ENCODE measurements at regions of chr3 and their contacts with region 1.

Region 1: DNA sequence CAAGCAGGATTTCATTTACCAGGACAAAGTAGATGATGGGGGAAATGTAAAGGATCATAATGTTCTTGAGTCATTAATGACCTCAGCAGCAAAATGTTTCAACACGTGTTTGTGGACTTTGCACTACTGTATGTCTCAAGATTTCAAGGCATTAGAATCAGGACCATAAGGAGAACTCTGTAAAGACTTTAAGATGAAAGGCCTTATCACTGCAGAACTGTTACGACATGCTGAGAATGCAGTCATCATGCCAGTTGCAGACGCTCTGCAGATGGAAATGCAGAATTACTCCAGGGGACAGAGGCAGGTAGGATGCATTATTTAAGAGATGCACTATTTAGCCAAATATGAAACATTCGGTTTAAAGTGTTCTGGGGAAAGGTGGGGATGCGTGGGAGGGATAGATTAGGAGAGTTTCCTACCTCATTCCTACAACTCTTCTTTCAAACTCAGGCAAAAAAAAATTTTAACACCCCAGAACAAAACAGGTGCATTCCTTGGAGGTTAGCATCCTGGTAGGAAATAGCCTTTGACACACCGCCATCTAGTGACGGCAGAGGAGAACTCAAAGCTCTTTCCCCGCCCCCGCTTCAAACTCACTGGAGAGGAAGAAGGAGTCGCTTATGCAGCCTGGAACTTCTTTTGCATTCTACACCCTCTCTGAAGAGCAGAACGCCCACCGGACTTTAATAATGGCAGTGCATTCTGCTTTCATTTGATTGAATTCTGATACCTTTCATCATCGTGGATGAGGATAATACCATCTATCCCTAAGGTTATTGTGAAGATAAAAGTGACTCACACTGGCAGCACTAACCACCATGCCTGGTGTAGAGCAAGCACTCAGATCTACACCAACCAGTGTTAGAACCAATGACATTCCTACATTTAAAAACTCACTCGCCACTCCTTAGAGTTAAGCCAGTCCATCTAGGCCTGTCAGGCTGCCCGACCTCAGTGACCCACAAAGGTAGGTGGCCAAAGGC is 43.1 kb upstream of the TOPAZ1 start:
- DNase-seq: peak; percentile 79
- H3K4me3 ChIP-seq: no peak overlapping the region
- H3K27ac ChIP-seq: no peak overlapping the region
- H3K4me1 ChIP-seq: peaks cover 0 to 5% (median 0%) of the 10 kb centered on the region in 6 donors
- H3K27me3 ChIP-seq: peaks cover 0 to 26% (median 0%) of the 10 kb centered on the region in 7 donors
- CTCF ChIP-seq: peak; percentile 57 to 89 (median 82)
- POLR2A ChIP-seq: no peak

Region 2: GRCh38 chr3:42957573-42957972 is 1241.0 kb before region 1 on chr3:
- intact Hi-C with region 1: loop called (anchors 10 kb)
- DNase-seq: no peak
- H3K4me3 ChIP-seq: no peak overlapping the region
- H3K27ac ChIP-seq: no peak overlapping the region
- H3K4me1 ChIP-seq: no peaks in the 10 kb centered on the region
- H3K27me3 ChIP-seq: peaks cover 0 to 6% (median 0%) of the 10 kb centered on the region in 7 donors
- CTCF ChIP-seq: no peak
- POLR2A ChIP-seq: no peak

Region 3: DNA sequence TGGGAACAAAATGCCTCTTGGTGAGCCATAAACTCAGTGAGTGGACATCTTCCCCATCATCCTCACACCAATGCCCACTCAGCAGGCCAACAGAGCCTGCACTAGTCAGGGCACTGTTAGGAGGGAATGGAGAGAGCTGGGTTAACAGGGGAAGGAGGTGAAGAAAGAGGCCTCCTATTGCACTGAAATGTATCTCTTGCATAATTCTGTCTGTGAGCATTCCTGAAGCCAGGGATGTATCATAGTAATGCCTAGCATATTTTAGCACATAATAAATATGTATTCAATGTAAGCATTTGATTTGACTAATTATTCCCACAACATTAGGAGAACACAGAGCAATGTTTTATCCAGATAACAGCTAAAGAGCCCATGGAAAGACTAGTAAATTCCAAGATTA is 658.0 kb before region 1 on chr3:
- intact Hi-C with region 1: loop called (anchors 5 kb)
- DNase-seq: no peak
- H3K4me3 ChIP-seq: no peak overlapping the region
- H3K27ac ChIP-seq: no peak overlapping the region
- H3K4me1 ChIP-seq: no peaks in the 10 kb centered on the region
- H3K27me3 ChIP-seq: no peaks in the 10 kb centered on the region
- CTCF ChIP-seq: no peak
- POLR2A ChIP-seq: no peak

Region 4: DNA sequence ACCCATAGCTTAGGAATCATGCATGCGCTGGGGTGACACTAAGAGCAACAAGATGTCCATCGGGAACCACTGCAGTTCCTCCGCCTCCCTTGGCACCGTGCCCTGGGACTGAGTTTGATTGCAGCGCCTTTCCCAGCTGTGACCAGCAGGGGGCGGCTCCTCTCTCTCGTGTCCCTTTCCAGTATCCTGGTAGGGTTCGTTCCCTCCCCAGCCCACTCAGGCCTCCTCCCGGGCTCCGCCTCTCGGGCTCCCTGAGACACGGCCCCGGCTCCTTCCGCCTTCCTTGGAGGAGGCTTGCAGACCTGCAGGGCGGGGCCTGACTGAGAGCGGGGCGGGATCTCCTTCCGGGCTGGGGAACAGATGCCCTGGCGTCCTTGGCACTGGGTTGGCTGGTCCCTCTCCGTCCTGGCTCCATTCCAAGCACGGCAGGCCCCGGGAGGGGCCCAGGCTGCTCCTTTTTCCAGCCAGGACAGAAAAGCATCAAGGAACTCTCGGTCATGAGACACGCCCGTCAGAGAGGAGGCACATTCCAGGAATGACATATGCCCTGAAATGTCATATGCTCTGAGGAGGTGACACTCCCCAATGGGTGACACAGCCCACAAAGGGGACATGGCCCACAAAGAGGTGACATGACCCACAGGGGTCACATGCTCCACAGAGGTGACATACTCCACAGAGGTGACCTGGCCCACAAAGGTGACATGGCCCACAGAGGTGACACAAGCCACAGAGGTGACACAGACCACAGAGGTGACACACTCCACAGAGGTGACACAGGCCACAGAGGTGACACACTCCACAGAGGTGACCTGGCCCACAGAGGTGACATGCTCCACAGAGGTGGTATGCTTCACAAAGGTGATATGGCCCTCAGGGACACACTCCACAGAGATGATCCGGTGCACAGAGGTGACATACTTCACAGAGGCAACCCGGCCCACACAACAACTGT is 428.8 kb before region 1 on chr3:
- intact Hi-C with region 1: loop called (anchors 10 kb)
- DNase-seq: peak; percentile 95
- H3K4me3 ChIP-seq: peak overlapping the region in 3 of 8 donors; percentile 0 to 49 (median 21)
- H3K27ac ChIP-seq: peak overlapping the region in 7 of 8 donors; percentile 63 to 82 (median 71)
- H3K4me1 ChIP-seq: peaks cover 13 to 49% (median 31%) of the 10 kb centered on the region in 6 donors
- H3K27me3 ChIP-seq: peaks cover 0 to 11% (median 0%) of the 10 kb centered on the region in 7 donors
- CTCF ChIP-seq: peak; percentile 67 to 96 (median 90)
- POLR2A ChIP-seq: no peak